Caco-2 (cell line): ENCODE measurements at regions of chr13 and their contacts with region 1.

Region 1: DNA sequence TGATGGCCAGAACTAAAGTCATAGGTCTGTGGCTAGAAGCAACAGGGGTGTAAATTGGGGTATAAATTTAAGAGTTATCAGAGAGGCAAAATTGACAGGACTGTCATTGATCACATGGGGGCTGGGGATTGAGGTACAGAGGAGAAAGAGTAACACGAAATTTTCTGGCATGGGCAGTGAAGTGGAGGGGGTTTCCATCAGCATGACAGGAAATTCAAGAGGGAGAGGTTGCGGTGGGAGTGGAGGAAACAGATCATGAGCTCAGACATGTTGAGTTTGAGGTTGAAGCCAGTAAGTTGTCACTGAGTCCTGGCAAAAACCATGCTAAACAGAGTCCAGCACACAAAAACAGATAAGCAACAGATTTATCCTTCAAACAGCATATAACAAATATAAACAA is 192.1 kb upstream of the TSC22D1 start:
- DNase-seq: no peak
- H3K4me3 ChIP-seq: no peak overlapping the region
- H3K4me3 Mint-ChIP-seq: no peak overlapping the region
- H3K27ac Mint-ChIP-seq: peak overlapping the region; percentile 45
- H3K4me1 ChIP-seq: peaks cover 55% of the 10 kb centered on the region
- H3K4me1 Mint-ChIP-seq: peaks cover 29% of the 10 kb centered on the region
- H3K27me3 ChIP-seq: no peaks in the 10 kb centered on the region
- H3K27me3 Mint-ChIP-seq: no peaks in the 10 kb centered on the region
- CTCF ChIP-seq: no peak

Region 2: GRCh38 chr13:44755872-44756271 is 12.4 kb before region 1 on chr13:
- CTCF ChIA-PET with region 1: no interaction called
- POLR2A ChIA-PET with region 1: no interaction called
- intact Hi-C with region 1: loop called (anchors 1 kb)
- DNase-seq: no peak
- H3K4me3 ChIP-seq: no peak overlapping the region
- H3K4me3 Mint-ChIP-seq: peak overlapping the region; percentile 44
- H3K27ac Mint-ChIP-seq: no peak overlapping the region
- H3K4me1 ChIP-seq: peaks cover 49% of the 10 kb centered on the region
- H3K4me1 Mint-ChIP-seq: peaks cover 35% of the 10 kb centered on the region
- H3K27me3 ChIP-seq: no peaks in the 10 kb centered on the region
- H3K27me3 Mint-ChIP-seq: no peaks in the 10 kb centered on the region
- CTCF ChIP-seq: no peak

Region 3: GRCh38 chr13:44854313-44855060 is 86.2 kb after region 1 on chr13:
- CTCF ChIA-PET with region 1: no interaction called
- POLR2A ChIA-PET with region 1: no interaction called
- intact Hi-C with region 1: loop called (anchors 5 kb)
- DNase-seq: peak; percentile 66 to 79
- H3K4me3 ChIP-seq: peak overlapping the region; percentile 21
- H3K4me3 Mint-ChIP-seq: peak overlapping the region; percentile 74
- H3K27ac Mint-ChIP-seq: peak overlapping the region; percentile 73
- H3K4me1 ChIP-seq: peaks cover 37% of the 10 kb centered on the region
- H3K4me1 Mint-ChIP-seq: peaks cover 45% of the 10 kb centered on the region
- H3K27me3 ChIP-seq: no peaks in the 10 kb centered on the region
- H3K27me3 Mint-ChIP-seq: no peaks in the 10 kb centered on the region
- CTCF ChIP-seq: no peak